HepG2 (cell line): ENCODE measurements at regions of chrX and their contacts with region 1.

Region 1: DNA sequence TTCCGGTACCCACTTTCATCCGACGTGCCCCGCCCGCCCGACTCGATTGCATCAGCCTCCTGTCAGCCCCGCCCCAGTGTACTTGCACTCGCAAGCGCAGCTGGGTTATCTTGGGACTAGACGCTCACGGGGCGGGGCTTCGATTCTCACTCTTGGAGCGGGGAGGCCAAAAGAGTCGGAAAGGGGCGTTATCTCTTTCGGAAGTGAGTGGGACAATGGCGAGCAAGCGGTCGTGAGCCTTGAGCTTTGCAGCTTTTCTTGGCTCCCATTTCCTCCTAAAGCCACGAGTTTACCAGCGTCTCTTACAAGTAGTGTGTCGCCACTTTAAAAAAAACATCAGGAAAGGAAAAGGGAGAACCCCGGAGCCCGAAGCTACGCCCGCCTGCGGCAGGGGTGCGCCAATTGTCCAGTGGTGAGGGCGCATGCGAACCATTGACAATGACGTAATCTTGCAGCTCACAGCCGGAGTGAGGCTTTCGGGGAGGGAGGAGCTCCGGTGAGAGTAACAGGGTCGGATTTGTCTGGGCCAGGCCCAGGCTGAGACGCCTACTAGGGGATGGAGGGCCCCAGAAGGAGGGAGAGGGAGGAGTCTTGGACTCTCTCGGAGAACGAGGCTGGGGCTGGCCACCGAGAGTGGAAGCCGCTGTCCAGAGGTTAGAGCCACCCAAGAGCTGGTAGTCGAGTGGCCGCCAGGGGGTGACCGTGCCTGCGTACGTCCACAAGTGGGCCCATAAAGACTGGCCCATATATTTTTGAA is 109.5 kb downstream of the GNL3L start:
- DNase-seq: peak; percentile 86
- ATAC-seq: peak; percentile 96
- H3K4me3 ChIP-seq: peak overlapping the region; percentile 60 to 70 (median 65)
- H3K27ac ChIP-seq: peak overlapping the region; percentile 91
- H3K4me1 ChIP-seq: peaks cover 16% of the 10 kb centered on the region; the same call in 1 of the 2 replicates
- H3K27me3 ChIP-seq: no peaks in the 10 kb centered on the region
- CTCF ChIP-seq: peak; percentile 77
- EP300 ChIP-seq: no peak
- POLR2A ChIP-seq: peak; percentile 60 to 86
- RAD21 ChIP-seq: peak; percentile 29; the same call in 1 of the 2 replicates

Region 2: DNA sequence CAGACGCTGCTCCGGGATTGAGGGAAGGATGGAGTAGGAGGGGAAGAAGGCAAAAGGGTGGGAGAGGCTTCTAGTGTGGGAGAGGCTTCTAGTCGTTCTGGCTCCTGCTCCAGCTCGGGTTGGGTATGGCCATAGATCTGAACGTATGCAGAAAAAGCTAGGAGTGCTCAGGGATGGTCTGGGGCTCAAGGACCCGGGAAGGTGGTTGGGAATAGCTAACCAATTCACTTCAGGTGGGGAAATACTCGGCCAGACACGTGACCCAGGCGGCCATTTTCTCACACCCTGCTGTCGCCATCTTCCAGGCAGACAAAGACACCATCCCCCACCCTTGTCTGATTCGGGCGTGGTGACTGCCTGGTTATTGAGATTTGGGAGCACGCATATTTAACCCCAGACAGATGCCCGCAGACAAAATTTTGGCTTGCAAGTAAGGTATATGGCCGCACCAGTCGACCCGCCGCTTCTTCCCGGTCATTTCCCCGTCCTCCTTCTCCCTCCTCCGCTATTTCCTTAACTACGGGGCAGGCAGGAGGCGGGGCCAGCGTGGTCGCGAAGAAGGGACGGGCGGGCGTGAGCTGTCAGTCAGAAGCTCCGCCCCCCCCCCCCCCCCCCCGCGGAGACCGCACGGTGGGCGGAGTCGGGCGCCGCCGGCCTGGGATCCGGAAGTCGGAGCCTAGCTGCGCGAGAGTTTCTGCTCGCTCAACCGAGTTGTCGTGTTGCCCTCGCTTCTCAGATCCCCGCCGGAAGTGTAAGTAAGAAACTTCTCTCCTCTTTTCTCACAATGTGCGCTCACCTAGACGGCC is 109.8 kb before region 1 on chrX and contains the start of gene GNL3L:
- CTCF ChIA-PET with region 1: no interaction called
- POLR2A ChIA-PET with region 1: interaction called, 16 read pairs
- in situ Hi-C with region 1: no loop called
- intact Hi-C with region 1: no loop called
- DNase-seq: peak; percentile 70
- ATAC-seq: peak; percentile 94
- H3K4me3 ChIP-seq: peak within 1 kb of the TSS; percentile 68 to 84 (median 72)
- H3K27ac ChIP-seq: peak within 1 kb of the TSS; percentile 79
- H3K4me1 ChIP-seq: peaks cover 37% of the 10 kb centered on the region
- H3K27me3 ChIP-seq: no peaks in the 10 kb centered on the region; a peak in 1 of 5 replicates
- CTCF ChIP-seq: no peak
- EP300 ChIP-seq: no peak
- POLR2A ChIP-seq: peak; percentile 65 to 67
- RAD21 ChIP-seq: no peak
- total RNA-seq, gene GNL3L: 32.6 and 51.2 TPM in 2 replicates

Region 3: GRCh38 chrX:54786962-54787361 is 147.4 kb after region 1 on chrX:
- CTCF ChIA-PET with region 1: interaction called, 9 read pairs
- POLR2A ChIA-PET with region 1: interaction called, 5 read pairs
- in situ Hi-C with region 1: loop called (anchors 10 kb)
- intact Hi-C with region 1: loop called (anchors 1 kb)
- DNase-seq: no peak
- ATAC-seq: peak; percentile 86
- H3K4me3 ChIP-seq: no peak overlapping the region
- H3K27ac ChIP-seq: no peak overlapping the region
- H3K4me1 ChIP-seq: no peaks in the 10 kb centered on the region
- H3K27me3 ChIP-seq: no peaks in the 10 kb centered on the region; a peak in 1 of 5 replicates
- CTCF ChIP-seq: peak; percentile 59
- EP300 ChIP-seq: no peak
- POLR2A ChIP-seq: no peak
- RAD21 ChIP-seq: no peak

Region 4: GRCh38 chrX:54808605-54809483 is 169.3 kb after region 1 on chrX:
- CTCF ChIA-PET with region 1: no interaction called
- POLR2A ChIA-PET with region 1: interaction called, 13 read pairs
- in situ Hi-C with region 1: no loop called
- intact Hi-C with region 1: no loop called
- DNase-seq: peak; percentile 92
- ATAC-seq: peak; percentile 74
- H3K4me3 ChIP-seq: peak overlapping the region; percentile 71 to 85 (median 73)
- H3K27ac ChIP-seq: peak overlapping the region; percentile 72
- H3K4me1 ChIP-seq: peaks cover 20% of the 10 kb centered on the region
- H3K27me3 ChIP-seq: no peaks in the 10 kb centered on the region; a peak in 1 of 5 replicates
- CTCF ChIP-seq: no peak
- EP300 ChIP-seq: no peak
- POLR2A ChIP-seq: peak; percentile 42 to 57; a peak in 3 of 4 replicates
- RAD21 ChIP-seq: no peak

Region 5: GRCh38 chrX:54999717-55000598 is 360.4 kb after region 1 on chrX and contains the start of gene APEX2:
- CTCF ChIA-PET with region 1: no interaction called
- POLR2A ChIA-PET with region 1: interaction called, 10 read pairs
- in situ Hi-C with region 1: no loop called
- intact Hi-C with region 1: no loop called
- DNase-seq: peak; percentile 82
- ATAC-seq: peak; percentile 98
- H3K4me3 ChIP-seq: peak within 1 kb of the TSS; percentile 60 to 81 (median 63)
- H3K27ac ChIP-seq: peak within 1 kb of the TSS; percentile 88
- H3K4me1 ChIP-seq: peaks cover 43% of the 10 kb centered on the region
- H3K27me3 ChIP-seq: no peaks in the 10 kb centered on the region; a peak in 1 of 5 replicates
- CTCF ChIP-seq: no peak
- EP300 ChIP-seq: no peak
- POLR2A ChIP-seq: peak; percentile 73 to 78
- RAD21 ChIP-seq: no peak
- total RNA-seq, gene APEX2: 12.7 and 16.2 TPM in 2 replicates